ENCODE measurements at regions of chr10 and their contacts with region 1.

Region 1: DNA sequence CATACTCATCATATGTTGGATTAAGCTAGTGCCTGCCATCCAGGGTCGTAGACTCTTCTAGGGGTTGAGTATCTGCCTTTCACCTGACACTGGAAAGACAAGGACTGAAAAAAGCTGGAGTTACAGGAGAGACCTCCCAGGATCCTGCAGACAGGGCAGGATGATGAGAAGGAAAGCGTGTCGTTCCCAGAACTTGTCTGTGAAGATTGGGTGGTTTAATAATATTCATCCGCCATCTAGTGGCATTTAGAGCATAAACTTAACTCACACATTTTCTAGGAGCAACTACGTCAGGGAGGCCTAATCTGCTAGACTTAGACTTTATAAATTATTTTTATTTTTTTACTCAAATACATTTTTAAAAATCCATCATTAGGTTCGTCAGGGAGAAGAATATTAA is 59.6 kb downstream of the ADRB1 start:
- DNase-seq: peak; percentile 73

Region 2: GRCh38 chr10:113788604-113789083 is 314.6 kb before region 1 on chr10:
- in situ Hi-C with region 1: loop called (anchors 25 kb)
- DNase-seq: peak; percentile 74

Measured in ACHN (cell line).